ENCODE measurements at regions of chr10 and their contacts with region 1.

Region 1: DNA sequence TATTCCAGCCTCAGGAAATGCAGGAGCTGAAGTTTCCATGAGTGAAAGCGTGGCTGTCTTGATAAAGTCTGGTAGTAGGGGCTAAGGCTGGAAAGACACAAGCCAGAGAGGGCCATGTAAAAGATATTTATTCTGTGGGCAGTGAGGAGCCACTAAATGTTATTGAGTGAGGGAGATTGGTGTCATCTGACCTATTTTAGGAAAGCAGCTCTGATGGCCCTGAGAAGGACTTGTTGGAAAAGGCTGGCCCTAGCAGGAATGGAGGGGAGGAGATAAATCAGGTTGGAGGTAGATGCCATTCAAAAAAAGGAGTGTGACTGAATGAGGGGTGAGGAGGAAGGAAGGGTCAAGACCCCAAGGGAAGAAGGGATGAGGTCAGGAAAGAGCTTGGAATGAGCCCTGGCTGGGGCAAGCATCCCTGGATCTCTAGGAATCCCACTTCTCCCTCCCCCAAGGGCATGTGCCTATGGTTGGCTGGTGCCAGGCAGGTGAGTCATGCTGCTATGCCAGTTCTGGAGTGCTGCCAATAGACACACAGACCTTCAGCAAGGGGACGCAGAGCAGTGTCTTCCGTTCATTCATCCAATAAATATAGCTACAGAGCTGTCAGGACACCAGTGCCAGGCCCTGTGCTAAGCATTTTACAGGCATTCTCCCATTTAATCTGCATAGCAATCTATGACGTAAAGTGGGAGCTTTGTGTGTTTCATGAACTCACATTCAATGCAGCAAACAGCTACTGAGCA is 2.0 kb downstream of the ANKRD2 start:
- DNase-seq: peak; percentile 95
- ATAC-seq: peak; percentile 80
- H3K4me3 ChIP-seq: no peak overlapping the region
- H3K27ac ChIP-seq: peak overlapping the region; percentile 46
- H3K4me1 ChIP-seq: peaks cover 41% of the 10 kb centered on the region
- H3K27me3 ChIP-seq: no peaks in the 10 kb centered on the region
- CTCF ChIP-seq: no peak

Region 2: GRCh38 chr10:97561678-97562077 is 12.9 kb before region 1 on chr10:
- CTCF ChIA-PET with region 1: no interaction called
- POLR2A ChIA-PET with region 1: no interaction called
- intact Hi-C with region 1: no loop called
- DNase-seq: no peak
- ATAC-seq: no peak
- H3K4me3 ChIP-seq: no peak overlapping the region
- H3K27ac ChIP-seq: no peak overlapping the region
- H3K4me1 ChIP-seq: peaks cover 9% of the 10 kb centered on the region
- H3K27me3 ChIP-seq: no peaks in the 10 kb centered on the region
- CTCF ChIP-seq: no peak

Region 3: DNA sequence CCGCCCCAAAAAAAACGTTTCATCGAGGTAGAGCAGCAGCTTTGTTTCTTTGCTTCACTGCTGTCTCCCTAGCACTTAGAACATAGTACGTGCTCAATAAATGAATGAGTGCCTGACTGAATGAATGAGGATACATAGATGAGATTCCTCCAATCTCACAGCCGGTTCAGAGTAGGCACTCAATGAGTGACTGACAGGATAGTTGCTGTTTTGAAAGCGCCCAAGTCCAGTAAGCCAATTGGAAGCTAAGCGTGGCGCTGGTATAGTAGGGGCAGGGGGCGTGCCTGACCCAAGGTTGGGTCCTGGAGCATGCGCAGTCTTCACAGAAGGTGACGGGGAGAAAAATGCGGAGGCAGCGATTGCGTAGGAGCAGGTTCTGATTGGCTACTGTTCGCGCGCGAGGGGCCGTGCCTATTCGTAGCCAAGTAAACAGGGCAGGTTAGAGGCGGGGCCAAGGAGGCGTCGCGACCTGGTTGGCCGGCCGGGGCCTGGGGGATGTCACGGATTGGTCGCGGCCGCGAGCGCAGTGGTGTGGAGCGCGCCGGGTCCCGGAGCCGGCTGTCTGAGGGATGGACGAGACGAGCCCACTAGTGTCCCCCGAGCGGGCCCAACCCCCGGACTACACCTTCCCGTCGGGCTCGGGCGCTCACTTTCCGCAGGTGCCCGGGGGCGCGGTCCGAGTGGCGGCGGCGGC is 65.8 kb after region 1 on chr10 and contains the start of gene PI4K2A:
- CTCF ChIA-PET with region 1: no interaction called
- POLR2A ChIA-PET with region 1: interaction called, 12 read pairs
- intact Hi-C with region 1: no loop called
- DNase-seq: peak; percentile 98
- ATAC-seq: peak; percentile 96
- H3K4me3 ChIP-seq: peak within 1 kb of the TSS; percentile 93
- H3K27ac ChIP-seq: no peak within 1 kb of the TSS
- H3K4me1 ChIP-seq: peaks cover 12% of the 10 kb centered on the region
- H3K27me3 ChIP-seq: no peaks in the 10 kb centered on the region
- CTCF ChIP-seq: no peak
- total RNA-seq, gene PI4K2A: 18.7 and 19.4 TPM in 2 replicates

Measured in PC-3 (cell line).